ENCODE measurements at regions of chr16 and their contacts with region 1.

Region 1: GRCh38 chr16:75541236-75541635 is 5.3 kb upstream of the CHST5 start:
- DNase-seq: no peak
- ATAC-seq: no peak
- H3K4me3 ChIP-seq: no peak overlapping the region
- H3K27ac ChIP-seq: no peak overlapping the region
- H3K4me1 ChIP-seq: no peaks in the 10 kb centered on the region
- H3K27me3 ChIP-seq: peaks cover 0 to 7% of the 10 kb centered on the region in 2 experiments; a peak in 3 of 5 replicates
- CTCF ChIP-seq: no peak
- EP300 ChIP-seq: no peak
- POLR2A ChIP-seq: no peak
- RAD21 ChIP-seq: no peak

Region 2: GRCh38 chr16:75506567-75506966 is 34.7 kb before region 1 on chr16:
- CTCF ChIA-PET with region 1: no interaction called
- POLR2A ChIA-PET with region 1: interaction called, 9 read pairs
- in situ Hi-C with region 1: loop called (anchors 5 kb)
- intact Hi-C with region 1: loop called (anchors 1 kb)
- DNase-seq: no peak
- ATAC-seq: peak; percentile 31
- H3K4me3 ChIP-seq: no peak overlapping the region
- H3K27ac ChIP-seq: no peak overlapping the region
- H3K4me1 ChIP-seq: peaks cover 5 to 16% of the 10 kb centered on the region in 2 experiments; a peak in 3 of 5 replicates
- H3K27me3 ChIP-seq: peaks cover 3 to 18% of the 10 kb centered on the region in 2 experiments; a peak in 4 of 5 replicates
- CTCF ChIP-seq: no peak
- EP300 ChIP-seq: no peak
- POLR2A ChIP-seq: no peak
- RAD21 ChIP-seq: no peak